ENCODE measurements at regions of chr15 and their contacts with region 1.

Region 1: GRCh38 chr15:55649054-55649423 is 60.9 kb upstream of the PYGO1 start:
- DNase-seq: no peak
- H3K4me3 Mint-ChIP-seq: no peak overlapping the region
- H3K27ac Mint-ChIP-seq: no peak overlapping the region
- H3K4me1 Mint-ChIP-seq: no peaks in the 10 kb centered on the region
- H3K27me3 Mint-ChIP-seq: peaks cover 20% of the 10 kb centered on the region

Region 2: DNA sequence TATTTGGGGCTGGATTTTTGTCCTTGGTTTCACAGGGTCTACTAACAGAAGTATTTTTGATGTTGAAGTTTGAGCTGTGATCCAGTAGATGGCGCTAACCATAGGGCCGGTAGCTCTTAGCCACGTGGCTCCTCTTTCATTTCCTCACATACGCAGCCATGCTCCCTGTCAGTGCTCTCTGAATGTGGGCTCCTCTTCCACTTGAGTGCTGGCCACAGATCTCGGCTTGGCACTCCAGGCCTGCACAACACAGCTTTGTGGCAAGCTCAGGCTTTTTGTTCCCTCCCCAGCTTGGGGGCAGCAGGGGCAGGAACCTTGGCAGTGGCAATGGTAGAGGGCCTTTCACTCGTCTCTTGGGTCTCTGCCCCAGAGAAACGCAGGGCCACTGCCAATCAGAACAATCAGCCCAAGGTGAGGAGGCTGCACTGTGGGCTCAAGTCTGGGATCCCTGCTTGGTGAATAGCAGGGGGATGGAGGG is 122.4 kb before region 1 on chr15:
- intact Hi-C with region 1: loop called (anchors 5 kb)
- DNase-seq: peak; percentile 64
- H3K4me3 Mint-ChIP-seq: no peak overlapping the region
- H3K27ac Mint-ChIP-seq: no peak overlapping the region
- H3K4me1 Mint-ChIP-seq: peaks cover 2% of the 10 kb centered on the region
- H3K27me3 Mint-ChIP-seq: peaks cover 35% of the 10 kb centered on the region

Region 3: GRCh38 chr15:55799291-55800212 is 150.5 kb after region 1 on chr15:
- intact Hi-C with region 1: loop called (anchors 10 kb)
- DNase-seq: peak; percentile 57
- H3K4me3 Mint-ChIP-seq: no peak overlapping the region
- H3K27ac Mint-ChIP-seq: no peak overlapping the region
- H3K4me1 Mint-ChIP-seq: no peaks in the 10 kb centered on the region
- H3K27me3 Mint-ChIP-seq: peaks cover 5% of the 10 kb centered on the region

Region 4: GRCh38 chr15:55846116-55846707 is 197.2 kb after region 1 on chr15:
- intact Hi-C with region 1: loop called (anchors 1 kb)
- DNase-seq: peak; percentile 90
- H3K4me3 Mint-ChIP-seq: no peak overlapping the region
- H3K27ac Mint-ChIP-seq: no peak overlapping the region
- H3K4me1 Mint-ChIP-seq: no peaks in the 10 kb centered on the region
- H3K27me3 Mint-ChIP-seq: no peaks in the 10 kb centered on the region

Measured in activated CD4-positive, alpha-beta T cell treated with anti-CD3 and anti-CD28 coated beads, Interleukin-2, amount 10 ng/mL, durations not matched to agents 24 days and 14 days (primary cell).